ENCODE measurements at regions of chr11 and their contacts with region 1.

Region 1: GRCh38 chr11:60924110-60924905 is at the start of gene TMEM132A:
- DNase-seq: peak; percentile 81 to 98 (median 88)

Region 2: DNA sequence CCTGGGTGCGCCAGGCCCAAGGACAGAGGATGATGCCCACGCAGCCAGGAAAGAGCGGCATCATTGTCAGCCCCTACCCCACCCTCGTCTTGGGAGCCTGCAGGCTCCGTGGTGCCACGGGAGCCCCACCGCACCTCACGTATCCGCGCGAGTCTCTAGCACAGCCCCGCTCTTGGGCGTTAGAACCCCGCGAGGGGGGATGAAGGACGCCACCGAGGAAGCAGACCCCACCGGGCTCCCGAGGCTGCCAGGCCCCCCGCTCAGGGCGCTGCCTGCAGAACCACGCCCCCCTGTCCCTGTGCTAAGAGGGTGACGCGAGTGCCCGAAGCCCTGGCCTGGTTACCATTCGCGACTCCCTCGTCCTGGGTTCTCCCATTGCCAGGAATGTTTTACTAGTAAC is 277.2 kb before region 1 on chr11:
- intact Hi-C with region 1: no loop called
- DNase-seq: peak in 1 of 10 donors; percentile 50

Region 3: DNA sequence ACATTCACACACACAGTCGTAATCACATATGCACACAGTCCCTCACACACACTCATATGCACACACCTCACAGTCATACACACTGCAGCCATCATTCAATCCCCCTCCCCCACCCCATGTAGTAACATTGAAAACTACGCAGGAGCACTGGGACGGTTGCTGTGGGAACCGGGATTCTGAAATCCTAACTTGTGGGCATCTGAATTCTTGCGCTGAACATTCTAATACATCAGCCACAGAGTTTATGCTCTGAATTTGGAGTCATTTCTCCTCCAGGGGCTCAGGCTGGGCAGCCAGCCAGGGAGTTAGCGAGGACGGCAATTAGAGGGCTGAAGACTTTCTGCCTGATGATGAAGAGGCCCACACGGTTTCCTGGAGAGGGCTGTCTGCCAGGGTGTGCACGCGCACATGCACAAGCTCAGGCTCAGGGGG is 79.9 kb after region 1 on chr11:
- intact Hi-C with region 1: no loop called
- DNase-seq: peak in 3 of 10 donors; percentile 52 to 76 (median 72)

Region 4: GRCh38 chr11:61037694-61038093 is 113.4 kb after region 1 on chr11:
- intact Hi-C with region 1: loop called (anchors 5 kb)
- DNase-seq: peak in 9 of 10 donors; percentile 30 to 94 (median 67)

Region 5: GRCh38 chr11:61129639-61130523 is 205.6 kb after region 1 on chr11:
- intact Hi-C with region 1: loop called (anchors 10 kb)
- DNase-seq: peak; percentile 83 to 98 (median 92)